ENCODE measurements at regions of chr14 and their contacts with region 1.

Region 1: GRCh38 chr14:21103710-21104447 is 3.0 kb downstream of the TMEM253 start:
- DNase-seq: peak; percentile 97
- ATAC-seq: peak; percentile 93 to 96

Region 2: DNA sequence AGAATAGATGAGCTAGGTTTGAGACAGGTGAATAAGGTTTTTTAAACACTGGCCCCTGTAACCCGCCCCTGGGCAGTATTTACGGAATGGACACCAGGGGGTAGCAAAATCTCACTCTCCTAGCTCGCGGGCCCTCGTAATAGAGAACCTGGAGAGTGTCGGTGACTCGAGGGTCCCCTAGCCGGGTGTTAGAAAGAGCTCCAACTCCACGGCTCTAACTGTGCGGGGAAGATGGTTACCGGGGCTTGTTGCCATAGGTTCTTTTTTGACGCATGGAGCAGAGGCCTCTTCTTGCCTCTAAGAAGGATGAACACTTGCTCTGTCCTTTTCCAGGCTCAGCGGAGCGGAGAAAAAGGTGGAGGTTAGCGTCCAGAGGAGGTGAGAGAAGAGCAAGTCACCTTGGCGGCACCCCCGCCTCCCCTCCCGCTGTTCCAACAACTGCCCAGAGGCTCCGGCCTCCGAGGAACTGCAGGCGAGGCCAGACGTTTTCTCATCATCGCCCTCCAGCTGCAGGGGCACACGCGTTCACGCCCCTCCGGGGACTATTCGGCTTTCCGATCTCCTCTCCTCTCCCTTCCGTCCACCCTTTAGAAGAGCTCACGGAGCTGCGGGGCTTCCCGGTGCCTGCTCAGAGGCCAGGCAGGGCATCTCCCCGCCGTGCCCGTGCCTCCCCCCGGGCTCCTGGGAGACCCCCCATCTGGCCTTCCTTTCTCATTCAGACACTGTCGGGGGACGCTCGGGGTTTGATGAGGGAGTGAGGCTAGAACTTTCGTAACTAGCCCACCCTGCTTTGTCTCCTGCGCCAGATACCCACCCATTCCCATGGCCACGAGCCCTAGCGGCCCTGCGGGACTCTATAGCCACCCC is 35.1 kb before region 1 on chr14:
- intact Hi-C with region 1: loop called (anchors 2 to 5 kb)
- DNase-seq: peak; percentile 61
- ATAC-seq: peak; percentile 16 to 25

Region 3: DNA sequence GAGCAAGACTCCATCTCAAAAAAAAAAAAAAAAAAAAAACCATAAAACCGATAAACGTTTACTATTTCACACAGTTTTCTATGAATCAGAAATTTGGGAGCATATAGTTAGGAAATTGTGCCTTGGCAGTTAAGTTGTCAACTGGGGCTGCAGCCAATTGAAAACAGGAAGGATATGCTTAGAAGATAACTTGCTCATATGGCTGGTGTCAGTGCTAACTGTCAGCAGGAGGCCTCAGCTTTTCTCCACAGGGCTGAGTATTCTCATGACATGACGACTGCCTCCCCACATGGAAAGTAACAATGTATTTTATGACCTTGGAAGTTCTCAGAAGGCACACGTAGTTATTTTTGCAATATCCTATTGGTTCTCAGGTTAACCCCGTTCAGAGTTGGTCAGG is 81.6 kb after region 1 on chr14:
- intact Hi-C with region 1: no loop called
- DNase-seq: no peak
- ATAC-seq: no peak

Region 4: GRCh38 chr14:21334202-21334899 is 230.5 kb after region 1 on chr14:
- intact Hi-C with region 1: no loop called
- DNase-seq: no peak
- ATAC-seq: no peak

Region 5: GRCh38 chr14:21748869-21749303 is 645.0 kb after region 1 on chr14:
- intact Hi-C with region 1: no loop called
- DNase-seq: no peak
- ATAC-seq: peak in 1 of 2 donors; percentile 50

Measured in left cardiac atrium (tissue), 4 donors.